Right cardiac atrium (tissue), 5 donors: ENCODE measurements at regions of chr11 and their contacts with region 1.

Region 1: GRCh38 chr11:130894322-130895025 is 21.8 kb downstream of the SNX19 start:
- DNase-seq: peak; percentile 64 to 88 (median 74)
- ATAC-seq: peak; percentile 15 to 43
- H3K4me3 ChIP-seq: no peak overlapping the region
- H3K27ac ChIP-seq: no peak overlapping the region
- H3K4me1 ChIP-seq: peaks cover 10% of the 10 kb centered on the region
- H3K27me3 ChIP-seq: no peaks in the 10 kb centered on the region

Region 2: DNA sequence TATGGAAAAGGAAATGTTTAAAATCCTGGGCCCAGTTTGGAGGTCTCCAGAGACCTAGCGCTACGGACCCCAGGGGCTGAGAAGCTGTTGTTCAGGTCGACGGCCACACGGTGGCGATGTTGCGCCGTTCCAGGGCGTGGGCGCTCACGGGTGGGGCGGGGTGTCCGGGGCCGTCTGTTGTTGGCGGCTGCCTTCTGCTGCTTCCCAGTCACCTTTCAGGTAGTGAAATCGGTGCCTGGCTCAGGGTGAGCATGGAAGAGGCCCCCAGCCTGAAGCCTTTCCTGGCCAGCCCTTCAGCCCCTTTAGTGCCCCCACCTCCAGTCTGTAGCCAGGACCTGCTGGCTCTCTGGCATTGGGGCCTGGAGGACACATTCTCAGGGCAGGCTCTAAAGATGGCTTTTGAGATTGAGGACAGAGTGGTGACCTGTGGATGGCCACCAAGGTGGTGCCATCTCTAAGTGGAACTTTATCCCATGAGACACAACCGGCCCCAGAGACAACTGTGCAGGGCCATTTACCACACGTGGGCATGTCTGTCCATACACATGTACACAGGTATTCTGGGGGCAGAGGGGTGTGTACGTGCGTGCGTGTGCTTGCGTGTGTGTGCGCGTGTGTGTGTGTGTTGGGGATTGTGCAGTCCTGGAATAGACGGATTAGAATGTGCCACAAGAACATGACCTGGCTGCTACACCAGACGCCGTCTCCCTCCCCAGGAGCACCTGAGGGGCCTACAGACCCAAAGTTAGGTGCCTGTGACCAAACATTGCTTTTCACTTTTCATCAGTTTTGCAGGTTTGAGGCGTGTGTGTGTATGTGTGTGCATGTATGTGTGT is 681.1 kb before region 1 on chr11:
- intact Hi-C with region 1: loop called in 1 of 4 experiments (anchors 10 kb)
- DNase-seq: peak; percentile 52 to 85 (median 83)
- ATAC-seq: peak; percentile 54 to 71
- H3K4me3 ChIP-seq: no peak overlapping the region
- H3K27ac ChIP-seq: no peak overlapping the region
- H3K4me1 ChIP-seq: no peaks in the 10 kb centered on the region
- H3K27me3 ChIP-seq: no peaks in the 10 kb centered on the region

Region 3: GRCh38 chr11:130434521-130435223 is 459.8 kb before region 1 on chr11:
- intact Hi-C with region 1: loop called (anchors 2 to 10 kb)
- DNase-seq: peak; percentile 76 to 90 (median 82)
- ATAC-seq: peak; percentile 91 to 92
- H3K4me3 ChIP-seq: peak overlapping the region; percentile 84
- H3K27ac ChIP-seq: peak overlapping the region; percentile 73
- H3K4me1 ChIP-seq: peaks cover 2% of the 10 kb centered on the region
- H3K27me3 ChIP-seq: no peaks in the 10 kb centered on the region

Region 4: DNA sequence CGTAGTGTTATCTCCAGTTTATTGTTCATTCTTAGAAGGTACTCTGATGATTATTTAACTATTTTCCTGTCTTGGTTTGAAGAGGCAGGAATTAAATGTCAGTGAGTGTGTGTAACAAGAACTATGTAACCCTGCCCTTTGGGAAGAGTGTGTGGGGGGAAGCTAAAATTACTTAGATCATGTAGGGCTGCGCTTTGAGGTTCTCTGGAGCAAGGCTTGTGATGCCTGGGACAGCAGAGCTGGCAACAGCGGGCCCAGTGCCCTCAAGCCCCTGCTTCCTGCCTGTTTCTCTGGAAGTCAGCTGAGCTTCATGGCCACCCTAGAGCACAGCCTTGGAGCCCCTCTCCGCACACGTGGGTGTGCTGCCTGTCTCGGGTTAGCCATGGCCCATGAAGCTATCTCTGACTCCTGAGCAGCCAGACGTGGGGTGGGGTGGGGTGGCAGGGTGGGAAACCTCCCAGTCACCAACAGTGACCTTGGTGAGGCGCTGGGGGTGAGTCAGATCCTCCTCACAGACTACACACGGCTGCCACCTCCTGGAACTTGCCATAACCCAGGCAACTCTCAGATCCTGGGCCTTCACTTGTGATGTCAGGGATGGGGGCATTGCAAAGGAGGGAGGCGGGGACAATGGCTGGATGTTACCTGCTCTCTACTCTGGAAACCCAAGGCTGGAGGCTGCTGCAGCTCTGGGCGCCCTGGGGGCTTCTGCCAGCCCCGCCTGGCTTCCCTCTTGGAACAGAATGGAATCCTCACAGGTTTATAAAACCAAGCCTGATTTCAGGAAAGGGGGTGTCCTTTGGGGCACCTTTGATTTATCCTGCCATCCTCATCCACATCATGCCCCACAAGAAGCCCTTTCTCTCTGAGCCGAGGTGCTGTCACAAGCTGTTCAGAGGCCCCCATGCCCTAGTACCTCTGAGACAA is 66.8 kb before region 1 on chr11:
- intact Hi-C with region 1: no loop called
- DNase-seq: peak; percentile 78 to 86 (median 82)
- ATAC-seq: peak; percentile 84 to 95
- H3K4me3 ChIP-seq: no peak overlapping the region
- H3K27ac ChIP-seq: no peak overlapping the region
- H3K4me1 ChIP-seq: peaks cover 11% of the 10 kb centered on the region
- H3K27me3 ChIP-seq: no peaks in the 10 kb centered on the region